Activated naive CD4-positive, alpha-beta T cell treated with anti-CD3 and anti-CD28 coated beads, Interleukin-2, amount 10 ng/mL, durations not matched to agents 7 days and 5 days (primary cell): ENCODE measurements at regions of chr11 and their contacts with region 1.

Region 1: GRCh38 chr11:73236854-73237253 is 18.8 kb downstream of the P2RY2 start:
- DNase-seq: peak; percentile 55
- H3K4me3 Mint-ChIP-seq: no peak overlapping the region
- H3K27ac Mint-ChIP-seq: no peak overlapping the region
- H3K4me1 Mint-ChIP-seq: no peaks in the 10 kb centered on the region
- H3K27me3 Mint-ChIP-seq: peaks cover 25% of the 10 kb centered on the region

Region 2: DNA sequence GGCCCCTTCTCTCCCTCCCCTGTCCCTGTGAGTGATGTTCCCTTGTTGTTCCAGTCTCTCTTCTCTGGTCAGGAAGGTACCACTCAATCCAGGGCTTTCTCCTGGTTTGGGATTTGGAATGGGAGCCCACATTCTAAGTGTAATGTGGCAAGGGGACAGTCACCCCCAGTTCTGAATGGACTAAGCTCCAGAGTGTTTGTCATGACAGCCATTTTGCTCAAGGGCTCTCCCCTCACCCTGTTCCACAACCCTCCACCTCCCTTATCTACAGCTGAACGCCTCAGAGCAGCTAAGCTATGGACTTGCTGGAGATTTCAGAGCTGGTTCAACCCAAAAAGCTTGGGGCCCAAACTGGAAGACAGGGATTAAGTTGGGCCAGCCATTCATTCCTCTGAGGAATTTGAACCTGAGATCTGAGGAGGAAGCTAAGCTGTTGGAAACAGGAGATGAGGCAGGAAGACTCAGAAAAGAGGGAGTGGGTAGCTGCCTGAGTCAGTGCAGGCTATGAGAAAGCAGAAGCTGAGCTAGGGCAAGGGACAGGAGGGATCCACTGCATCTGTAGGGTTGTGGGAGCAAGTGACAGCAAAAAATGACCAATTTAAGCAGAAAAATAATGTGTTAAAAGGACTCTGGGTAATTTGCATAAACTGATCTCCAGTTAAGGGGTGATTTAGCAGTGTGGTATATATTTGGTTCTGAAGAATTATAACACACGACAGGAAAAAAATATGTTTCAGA is 71.9 kb before region 1 on chr11:
- CTCF ChIA-PET with region 1: no interaction called
- DNase-seq: no peak
- H3K4me3 Mint-ChIP-seq: no peak overlapping the region
- H3K27ac Mint-ChIP-seq: no peak overlapping the region
- H3K4me1 Mint-ChIP-seq: no peaks in the 10 kb centered on the region
- H3K27me3 Mint-ChIP-seq: peaks cover 42% of the 10 kb centered on the region

Region 3: DNA sequence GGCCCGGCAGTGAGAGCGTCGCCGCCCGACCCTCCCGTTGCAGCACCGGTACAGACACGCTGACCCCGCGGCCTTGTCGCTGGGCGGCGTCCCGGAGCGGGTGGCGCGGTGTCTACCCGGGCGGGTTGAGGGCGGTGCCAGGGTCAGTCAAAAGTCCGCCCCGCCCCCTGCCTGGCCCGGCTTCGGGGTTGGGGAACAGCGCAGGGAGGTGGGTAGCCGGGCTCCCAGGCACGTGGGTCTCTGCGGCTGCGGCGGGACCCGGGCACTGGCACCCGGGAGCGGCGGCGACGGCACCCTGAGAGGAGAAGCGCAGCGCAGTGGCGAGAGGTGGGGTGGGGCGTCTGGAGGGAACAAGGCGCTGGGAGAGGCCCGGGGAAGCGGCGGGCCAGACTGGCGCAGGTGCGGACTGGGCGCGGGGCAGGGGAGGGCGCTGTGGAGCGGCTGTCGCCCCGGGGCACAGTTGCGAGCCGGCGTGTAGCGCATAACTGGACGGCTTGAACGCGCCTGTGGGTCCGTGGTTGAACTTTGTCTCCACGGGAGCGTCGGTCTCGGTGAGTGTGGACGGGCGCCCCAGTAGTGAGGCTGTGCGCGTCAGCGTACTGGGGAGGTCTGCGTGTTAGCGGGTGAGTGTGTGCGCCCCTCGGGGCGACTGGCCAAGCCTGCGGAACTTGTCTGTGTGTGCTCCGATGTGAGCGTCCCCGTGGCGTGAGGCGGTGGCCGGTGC is 18.6 kb before region 1 on chr11 and contains the start of gene P2RY2:
- CTCF ChIA-PET with region 1: interaction called, 12 read pairs
- DNase-seq: peak; percentile 59
- H3K4me3 Mint-ChIP-seq: peak within 1 kb of the TSS; percentile 41
- H3K27ac Mint-ChIP-seq: no peak within 1 kb of the TSS
- H3K4me1 Mint-ChIP-seq: peaks cover 6% of the 10 kb centered on the region
- H3K27me3 Mint-ChIP-seq: peaks cover 76% of the 10 kb centered on the region